IMR-90 (cell line): ENCODE measurements at regions of chr3 and their contacts with region 1.

Region 1: GRCh38 chr3:109532257-109533216 is 195.2 kb upstream of the DPPA4 start:
- DNase-seq: peak; percentile 83
- ATAC-seq: peak; percentile 96
- H3K4me3 ChIP-seq: no peak overlapping the region
- H3K27ac ChIP-seq: no peak overlapping the region
- H3K4me1 ChIP-seq: no peaks in the 10 kb centered on the region
- H3K27me3 ChIP-seq: no peaks in the 10 kb centered on the region
- CTCF ChIP-seq: peak; percentile 72
- POLR2A ChIP-seq: no peak
- RAD21 ChIP-seq: peak; percentile 80

Region 2: GRCh38 chr3:109257269-109257668 is 275.3 kb before region 1 on chr3:
- CTCF ChIA-PET with region 1: no interaction called
- POLR2A ChIA-PET with region 1: no interaction called
- dilution Hi-C with region 1: no loop called
- in situ Hi-C with region 1: no loop called
- intact Hi-C with region 1: no loop called
- DNase-seq: peak; percentile 43
- ATAC-seq: no peak
- H3K4me3 ChIP-seq: no peak overlapping the region
- H3K27ac ChIP-seq: no peak overlapping the region
- H3K4me1 ChIP-seq: no peaks in the 10 kb centered on the region
- H3K27me3 ChIP-seq: no peaks in the 10 kb centered on the region
- CTCF ChIP-seq: no peak
- POLR2A ChIP-seq: no peak
- RAD21 ChIP-seq: no peak

Region 3: GRCh38 chr3:110006913-110007312 is 474.4 kb after region 1 on chr3:
- CTCF ChIA-PET with region 1: no interaction called
- POLR2A ChIA-PET with region 1: no interaction called
- dilution Hi-C with region 1: no loop called
- in situ Hi-C with region 1: no loop called
- intact Hi-C with region 1: no loop called
- DNase-seq: no peak
- ATAC-seq: no peak
- H3K4me3 ChIP-seq: no peak overlapping the region
- H3K27ac ChIP-seq: no peak overlapping the region
- H3K4me1 ChIP-seq: no peaks in the 10 kb centered on the region
- H3K27me3 ChIP-seq: no peaks in the 10 kb centered on the region
- CTCF ChIP-seq: no peak
- POLR2A ChIP-seq: no peak
- RAD21 ChIP-seq: no peak

Region 4: DNA sequence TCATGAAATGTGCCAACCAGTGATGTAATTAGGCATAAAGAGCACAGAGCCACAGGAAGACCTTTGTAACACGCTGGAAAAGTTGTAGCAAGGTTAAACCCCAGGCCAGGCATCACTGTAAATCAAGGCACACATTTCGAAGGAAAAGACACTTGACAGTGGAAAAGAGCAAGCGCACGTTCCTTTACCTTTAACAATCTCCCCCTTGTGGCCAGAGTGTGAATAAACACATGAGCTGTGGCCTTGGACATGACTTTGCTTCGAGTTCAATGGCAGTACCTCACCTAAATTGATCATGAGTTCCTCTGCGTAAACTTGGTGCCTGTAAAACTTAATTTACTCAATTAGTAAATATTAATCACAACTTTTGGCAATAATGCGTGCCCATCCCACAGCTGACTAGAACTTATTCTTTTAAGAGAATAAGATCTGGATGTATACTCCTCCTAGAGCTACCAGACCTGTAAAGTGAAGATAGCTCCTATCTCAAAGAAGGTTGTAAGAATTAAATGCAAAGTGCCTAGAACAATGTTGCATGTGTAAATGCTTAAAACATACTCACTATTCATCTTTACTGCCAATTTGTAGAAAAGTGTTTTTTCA is 782.1 kb after region 1 on chr3:
- CTCF ChIA-PET with region 1: no interaction called
- POLR2A ChIA-PET with region 1: no interaction called
- dilution Hi-C with region 1: no loop called
- in situ Hi-C with region 1: no loop called
- intact Hi-C with region 1: loop called (anchors 10 kb)
- DNase-seq: peak; percentile 39
- ATAC-seq: no peak
- H3K4me3 ChIP-seq: no peak overlapping the region
- H3K27ac ChIP-seq: no peak overlapping the region
- H3K4me1 ChIP-seq: no peaks in the 10 kb centered on the region; the same call in 1 of the 2 replicates
- H3K27me3 ChIP-seq: no peaks in the 10 kb centered on the region
- CTCF ChIP-seq: peak; percentile 42
- POLR2A ChIP-seq: no peak
- RAD21 ChIP-seq: peak; percentile 44

Region 5: GRCh38 chr3:110413807-110414748 is 881.5 kb after region 1 on chr3:
- CTCF ChIA-PET with region 1: no interaction called
- POLR2A ChIA-PET with region 1: no interaction called
- dilution Hi-C with region 1: no loop called
- in situ Hi-C with region 1: no loop called
- intact Hi-C with region 1: loop called (anchors 10 kb)
- DNase-seq: peak; percentile 84
- ATAC-seq: peak; percentile 84
- H3K4me3 ChIP-seq: no peak overlapping the region
- H3K27ac ChIP-seq: peak overlapping the region; percentile 100
- H3K4me1 ChIP-seq: peaks cover 12% of the 10 kb centered on the region
- H3K27me3 ChIP-seq: no peaks in the 10 kb centered on the region
- CTCF ChIP-seq: no peak
- POLR2A ChIP-seq: no peak
- RAD21 ChIP-seq: no peak